AG04449 (cell line): ENCODE measurements at regions of chr17 and their contacts with region 1.

Region 1: GRCh38 chr17:48593840-48594537 is 410 bp upstream of the HOXB5 start:
- DNase-seq: peak; percentile 63
- H3K4me3 ChIP-seq: peak overlapping the region; percentile 76
- CTCF ChIP-seq: peak; percentile 99

Region 2: DNA sequence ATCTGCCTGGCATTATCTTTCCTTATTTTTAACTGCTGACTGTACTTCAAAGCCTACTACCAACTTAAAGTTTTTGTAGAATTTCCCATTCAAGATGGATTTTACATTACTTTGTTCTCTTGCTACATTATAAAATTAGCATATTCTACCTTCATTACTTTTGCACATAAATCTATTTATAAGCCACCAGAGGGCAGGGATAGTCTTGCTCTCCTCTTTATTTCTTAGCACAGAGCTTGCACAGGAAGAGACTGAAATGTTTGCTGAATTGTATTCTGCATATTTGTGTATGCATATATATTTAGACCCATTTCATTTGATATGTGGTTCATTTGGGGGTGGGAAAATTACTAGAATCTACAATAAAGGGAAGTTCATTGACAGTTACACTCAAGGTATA is 271.9 kb before region 1 on chr17:
- CTCF ChIA-PET with region 1: interaction called, 27 read pairs
- POLR2A ChIA-PET with region 1: no interaction called
- DNase-seq: no peak
- H3K4me3 ChIP-seq: no peak overlapping the region
- CTCF ChIP-seq: no peak

Region 3: DNA sequence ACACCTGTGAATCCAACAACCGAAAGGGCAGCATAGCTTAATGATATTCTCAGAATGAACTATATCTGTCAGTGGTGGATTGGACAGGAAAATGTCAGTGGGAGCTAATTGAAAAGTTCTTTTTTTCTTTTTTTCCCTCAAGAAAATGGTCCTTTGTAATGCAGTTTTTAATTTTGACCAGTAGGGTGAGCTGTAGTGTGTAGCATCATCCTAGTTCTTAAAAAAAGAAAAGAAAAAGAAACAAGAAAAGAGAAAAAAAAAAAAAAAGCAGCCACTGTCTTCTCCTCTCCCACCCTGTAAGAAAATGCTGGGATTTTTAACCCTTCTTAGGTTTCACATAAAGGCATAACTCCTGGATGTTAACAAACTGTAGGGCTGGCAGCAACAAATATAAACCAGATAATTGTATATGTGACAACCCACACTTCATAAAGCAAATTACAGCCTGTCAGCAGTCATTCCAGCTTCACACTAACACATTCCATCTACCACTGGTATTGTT is 242.1 kb before region 1 on chr17:
- CTCF ChIA-PET with region 1: interaction called, 80 read pairs
- POLR2A ChIA-PET with region 1: interaction called, 4 read pairs
- DNase-seq: no peak
- H3K4me3 ChIP-seq: no peak overlapping the region
- CTCF ChIP-seq: peak; percentile 27

Region 4: DNA sequence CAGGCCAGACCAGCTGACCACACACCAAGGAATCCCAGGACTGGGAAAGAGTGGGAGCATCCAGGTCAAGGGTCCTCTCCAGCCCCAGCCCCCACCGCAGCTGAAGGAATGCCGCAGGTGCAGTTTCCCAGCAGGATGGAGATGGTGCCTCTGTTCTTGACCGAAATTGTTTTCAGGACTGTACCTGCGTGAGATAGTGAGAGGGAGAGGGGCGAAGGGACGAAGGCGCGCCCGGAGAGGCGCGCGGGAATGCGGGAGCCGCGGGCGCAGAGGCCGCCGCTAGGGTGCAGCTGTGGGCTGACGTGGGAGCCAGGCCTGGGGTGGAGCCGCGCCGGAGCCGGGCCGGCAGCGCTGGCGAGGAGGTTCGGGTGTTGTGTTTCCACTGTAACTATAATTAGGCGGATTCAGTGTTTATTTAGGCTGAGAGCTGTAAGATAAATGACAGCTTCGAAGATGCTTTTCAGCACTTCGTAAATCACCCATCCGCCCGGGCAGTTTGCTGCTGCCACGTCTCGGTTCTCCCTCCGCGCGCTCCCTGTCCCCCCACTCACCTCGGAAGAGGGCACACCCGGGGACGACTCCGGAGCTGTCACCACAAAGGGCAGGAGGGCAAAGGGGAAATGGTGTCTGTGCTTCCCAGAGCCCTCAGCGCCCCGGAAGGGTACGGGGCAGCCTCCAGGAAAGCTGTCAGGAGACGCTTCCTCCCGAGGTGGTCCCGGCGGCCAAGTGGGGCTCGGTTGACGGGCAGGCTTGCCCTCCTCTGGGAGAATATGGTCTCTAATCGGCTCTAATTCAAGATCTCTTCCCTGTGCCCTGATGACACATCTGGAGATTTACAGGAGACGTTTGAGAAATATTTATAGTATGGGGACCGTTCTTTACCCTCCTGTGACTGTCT is 101.3 kb before region 1 on chr17:
- CTCF ChIA-PET with region 1: interaction called, 22 read pairs
- POLR2A ChIA-PET with region 1: interaction called, 10 read pairs
- DNase-seq: no peak
- H3K4me3 ChIP-seq: peak overlapping the region; percentile 45
- CTCF ChIP-seq: peak; percentile 90

Region 5: GRCh38 chr17:48555258-48556228 is 38.4 kb before region 1 on chr17:
- CTCF ChIA-PET with region 1: interaction called, 10 read pairs
- POLR2A ChIA-PET with region 1: interaction called, 12 read pairs
- DNase-seq: peak; percentile 94
- H3K4me3 ChIP-seq: peak overlapping the region; percentile 56
- CTCF ChIP-seq: no peak

Region 6: GRCh38 chr17:48618256-48618897 is 24.4 kb after region 1 on chr17:
- CTCF ChIA-PET with region 1: interaction called, 62 read pairs
- POLR2A ChIA-PET with region 1: interaction called, 8 read pairs
- DNase-seq: no peak
- H3K4me3 ChIP-seq: peak overlapping the region; percentile 29
- CTCF ChIP-seq: peak; percentile 88

Region 7: GRCh38 chr17:48704361-48705248 is 110.6 kb after region 1 on chr17:
- CTCF ChIA-PET with region 1: no interaction called
- POLR2A ChIA-PET with region 1: no interaction called
- DNase-seq: no peak
- H3K4me3 ChIP-seq: no peak overlapping the region
- CTCF ChIP-seq: no peak

Region 8: GRCh38 chr17:49543860-49544259 is 949.9 kb after region 1 on chr17:
- CTCF ChIA-PET with region 1: no interaction called
- POLR2A ChIA-PET with region 1: no interaction called
- DNase-seq: no peak
- H3K4me3 ChIP-seq: no peak overlapping the region
- CTCF ChIP-seq: no peak